Activated CD8-positive, alpha-beta memory T cell treated with anti-CD3 and anti-CD28 coated beads, Interleukin-2, amount 10 ng/mL, durations not matched to agents 7 days and 5 days (primary cell): ENCODE measurements at regions of chr16 and their contacts with region 1.

Region 1: DNA sequence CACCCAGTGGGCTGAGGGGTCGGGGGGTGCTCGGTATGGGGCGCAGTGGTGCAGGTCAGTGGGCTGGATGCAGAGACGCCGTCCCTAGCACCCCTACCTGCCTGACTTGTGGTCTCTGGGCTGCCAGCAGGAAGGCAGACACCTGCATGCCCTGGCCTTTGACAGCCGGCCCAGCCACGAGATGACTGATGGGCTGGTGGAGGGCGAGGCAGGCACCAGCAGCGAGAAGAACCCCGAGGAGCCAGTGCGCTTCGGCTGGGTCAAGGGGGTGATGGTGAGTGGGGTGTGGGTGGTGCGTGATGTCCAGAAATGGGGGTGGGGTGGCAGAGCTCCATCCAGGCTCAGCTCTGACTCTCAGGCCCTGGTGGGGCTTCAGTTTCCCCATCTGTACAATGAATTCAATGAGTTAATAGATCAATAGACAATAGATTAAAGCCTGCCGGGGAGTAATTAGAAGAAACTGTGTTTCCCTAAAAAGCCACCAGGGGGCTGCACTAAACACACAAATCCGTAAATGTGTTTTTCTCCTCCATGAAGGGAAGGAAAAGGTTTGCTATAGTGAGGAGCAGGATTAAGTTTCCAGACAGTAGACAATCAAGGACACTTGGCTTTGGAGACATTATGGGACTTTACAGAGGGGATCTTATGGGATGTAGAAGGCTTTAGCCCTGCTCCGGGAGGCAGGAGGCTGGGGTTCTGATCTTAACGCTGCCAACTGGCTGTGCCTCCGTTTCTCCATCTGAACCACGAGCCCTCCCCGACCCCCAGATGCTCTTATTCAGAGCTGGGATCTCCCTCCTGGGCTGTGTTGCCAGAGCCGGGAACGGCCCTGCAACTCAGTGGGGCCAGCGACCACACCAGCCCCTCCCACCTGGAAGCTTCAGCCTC is 2.2 kb downstream of the SLC12A3 start:
- DNase-seq: peak; percentile 56
- ATAC-seq: no peak
- H3K4me3 Mint-ChIP-seq: no peak overlapping the region
- H3K27ac Mint-ChIP-seq: no peak overlapping the region
- H3K4me1 Mint-ChIP-seq: peaks cover 31% of the 10 kb centered on the region
- H3K27me3 Mint-ChIP-seq: peaks cover 2% of the 10 kb centered on the region

Region 2: GRCh38 chr16:56610017-56610608 is 257.1 kb before region 1 on chr16:
- CTCF ChIA-PET with region 1: no interaction called
- DNase-seq: peak; percentile 75
- ATAC-seq: peak; percentile 17
- H3K4me3 Mint-ChIP-seq: peak overlapping the region; percentile 95
- H3K27ac Mint-ChIP-seq: peak overlapping the region; percentile 94
- H3K4me1 Mint-ChIP-seq: peaks cover 66% of the 10 kb centered on the region
- H3K27me3 Mint-ChIP-seq: no peaks in the 10 kb centered on the region

Region 3: DNA sequence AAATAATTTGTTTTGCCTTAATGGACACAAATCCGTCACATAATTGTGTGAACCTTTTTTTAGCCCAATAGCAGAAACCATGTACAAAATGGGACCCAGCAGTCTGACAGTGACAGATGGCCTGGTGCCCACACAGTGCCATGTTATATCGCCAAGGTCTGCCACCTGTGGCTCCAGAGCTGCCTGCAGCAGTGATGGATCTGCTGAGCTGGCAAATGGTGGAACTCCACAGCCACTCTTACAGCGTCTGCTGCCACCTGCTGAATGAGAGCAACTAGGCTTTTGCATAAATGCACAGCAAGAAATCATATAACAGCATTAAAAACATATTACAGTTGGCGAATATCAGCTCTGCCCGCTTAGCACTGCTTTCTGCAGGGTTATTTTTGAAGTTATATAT is 77.8 kb before region 1 on chr16:
- CTCF ChIA-PET with region 1: interaction called, 53 read pairs
- DNase-seq: peak; percentile 71
- ATAC-seq: peak; percentile 72
- H3K4me3 Mint-ChIP-seq: no peak overlapping the region
- H3K27ac Mint-ChIP-seq: no peak overlapping the region
- H3K4me1 Mint-ChIP-seq: peaks cover 4% of the 10 kb centered on the region
- H3K27me3 Mint-ChIP-seq: no peaks in the 10 kb centered on the region

Region 4: DNA sequence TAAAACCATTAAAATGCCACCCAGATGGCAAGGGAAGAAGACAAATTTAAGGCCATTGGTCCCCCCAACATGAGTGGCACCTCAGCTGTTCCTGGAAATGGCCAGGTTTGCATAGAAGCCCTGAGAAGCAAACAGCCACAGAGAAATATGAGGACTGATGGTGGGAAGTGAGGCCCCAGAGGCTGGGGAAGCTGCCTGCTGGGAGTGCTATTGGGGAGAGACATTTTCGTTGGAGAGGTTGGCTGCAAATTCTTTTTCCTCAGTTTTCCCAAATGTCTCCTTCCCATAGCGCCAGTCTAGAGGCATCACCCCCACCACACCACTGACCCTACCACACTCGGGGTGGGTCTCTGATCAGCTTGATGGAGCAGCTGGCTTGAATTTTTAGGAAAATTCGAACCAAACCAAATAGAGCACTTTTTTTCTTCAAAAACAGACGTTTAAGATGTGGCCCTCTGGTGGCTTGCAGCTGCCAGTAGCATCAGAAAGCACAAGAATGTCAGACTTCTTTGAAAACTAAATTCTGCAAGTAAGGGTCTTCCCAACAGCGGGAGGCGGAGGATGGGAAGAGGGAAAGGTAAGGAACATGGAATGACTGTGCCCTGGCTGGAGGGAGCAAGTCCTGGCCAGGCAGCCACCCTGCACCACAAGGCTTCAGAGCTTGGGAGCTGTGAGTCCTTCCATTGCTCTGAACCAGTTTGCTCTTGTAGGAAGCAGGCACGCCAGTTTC is 15.4 kb before region 1 on chr16:
- CTCF ChIA-PET with region 1: interaction called, 15 read pairs
- DNase-seq: no peak
- ATAC-seq: no peak
- H3K4me3 Mint-ChIP-seq: no peak overlapping the region
- H3K27ac Mint-ChIP-seq: no peak overlapping the region
- H3K4me1 Mint-ChIP-seq: peaks cover 39% of the 10 kb centered on the region
- H3K27me3 Mint-ChIP-seq: no peaks in the 10 kb centered on the region

Region 5: GRCh38 chr16:56903866-56904265 is 36.7 kb after region 1 on chr16:
- CTCF ChIA-PET with region 1: no interaction called
- DNase-seq: no peak
- ATAC-seq: no peak
- H3K4me3 Mint-ChIP-seq: no peak overlapping the region
- H3K27ac Mint-ChIP-seq: no peak overlapping the region
- H3K4me1 Mint-ChIP-seq: peaks cover 15% of the 10 kb centered on the region
- H3K27me3 Mint-ChIP-seq: peaks cover 58% of the 10 kb centered on the region

Region 6: DNA sequence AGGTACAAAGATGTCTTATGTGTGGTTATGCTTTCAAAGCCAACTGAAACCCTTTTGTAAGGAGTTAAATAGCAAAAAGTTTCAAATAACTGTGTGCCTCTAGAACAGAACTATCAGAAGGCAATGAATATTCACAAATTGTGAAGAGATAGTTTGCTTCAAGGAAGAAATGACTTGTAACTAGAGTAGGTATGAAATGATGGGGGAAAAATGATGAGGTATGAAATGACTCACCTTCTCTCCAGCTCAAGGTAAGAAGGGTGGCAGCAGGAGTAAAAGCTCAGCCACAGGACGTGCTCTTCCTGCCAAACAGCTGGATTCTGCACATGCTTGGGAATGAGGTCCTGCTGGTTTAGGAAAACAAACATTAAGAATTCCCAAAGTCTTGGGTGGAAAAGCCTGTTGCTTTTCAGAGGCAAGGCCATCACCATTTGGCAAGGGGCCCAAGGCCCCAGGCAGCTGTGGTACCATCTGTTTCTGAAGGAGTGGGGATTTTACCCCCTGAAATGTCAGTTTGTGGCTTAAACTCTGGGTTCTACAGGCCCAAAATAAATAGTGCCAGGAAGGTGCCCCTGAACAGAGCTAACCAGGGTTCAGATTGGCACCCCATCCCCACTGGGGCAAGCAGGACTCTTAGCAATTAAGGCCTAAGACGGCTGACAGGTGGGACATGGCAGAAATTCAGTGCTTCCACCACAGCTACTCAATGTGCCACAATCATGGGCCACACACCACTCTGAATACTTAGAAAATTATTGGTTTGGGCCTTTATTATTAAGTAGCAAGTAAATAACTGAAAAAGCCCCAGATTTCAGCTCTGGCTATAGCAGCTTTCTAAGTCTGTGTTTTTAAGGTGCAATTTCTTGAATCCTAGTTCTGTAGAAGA is 78.0 kb after region 1 on chr16:
- CTCF ChIA-PET with region 1: interaction called, 82 read pairs
- DNase-seq: no peak
- ATAC-seq: peak; percentile 68
- H3K4me3 Mint-ChIP-seq: no peak overlapping the region
- H3K27ac Mint-ChIP-seq: peak overlapping the region; percentile 60
- H3K4me1 Mint-ChIP-seq: peaks cover 57% of the 10 kb centered on the region
- H3K27me3 Mint-ChIP-seq: no peaks in the 10 kb centered on the region

Region 7: DNA sequence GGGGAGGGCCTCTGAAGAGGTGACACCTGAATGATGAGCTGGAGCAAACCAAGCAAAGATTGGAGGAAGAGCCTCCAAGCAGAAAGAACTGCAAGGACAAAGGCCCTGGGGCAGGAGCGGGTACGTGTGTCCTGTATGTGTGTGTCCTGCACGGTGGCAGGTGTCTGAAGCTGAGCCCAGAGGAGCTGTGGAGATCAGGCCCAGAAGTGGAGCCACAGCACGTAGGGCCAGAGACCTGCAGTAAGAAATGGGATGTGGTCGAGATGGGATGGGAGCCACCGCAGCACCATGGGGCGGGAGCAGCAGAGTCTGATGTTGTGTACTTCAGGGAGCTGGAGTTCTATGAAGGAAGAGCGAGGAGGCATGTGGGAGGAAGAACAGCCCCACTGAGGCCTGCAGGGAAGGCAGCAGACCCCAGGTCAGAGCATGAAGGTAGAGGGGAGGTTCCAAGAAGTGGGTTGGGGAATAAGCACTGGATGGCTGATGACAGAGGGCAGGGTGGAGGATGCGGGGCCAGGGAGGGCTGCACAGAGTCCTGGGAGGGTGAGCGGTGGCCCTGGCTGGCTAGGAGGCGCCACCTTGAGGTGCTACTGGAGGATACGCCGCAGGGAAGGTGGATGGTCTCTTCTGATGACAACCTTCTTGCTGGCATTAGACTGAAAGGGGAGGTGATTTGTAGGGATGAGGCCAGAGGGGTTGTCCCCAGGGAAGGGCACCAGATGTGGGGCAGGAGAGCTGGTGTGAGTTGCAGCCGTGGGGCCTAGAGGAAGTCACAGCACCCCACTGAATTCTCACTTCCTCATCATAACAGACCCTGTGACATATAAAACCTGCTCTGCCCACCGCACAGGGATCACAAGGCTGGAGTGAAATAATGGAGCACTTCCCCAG is 83.9 kb after region 1 on chr16:
- CTCF ChIA-PET with region 1: interaction called, 82 read pairs
- DNase-seq: peak; percentile 79
- ATAC-seq: peak; percentile 89
- H3K4me3 Mint-ChIP-seq: no peak overlapping the region
- H3K27ac Mint-ChIP-seq: peak overlapping the region; percentile 51
- H3K4me1 Mint-ChIP-seq: peaks cover 24% of the 10 kb centered on the region
- H3K27me3 Mint-ChIP-seq: peaks cover 3% of the 10 kb centered on the region